Left colon (tissue), 2 donors: ENCODE measurements at regions of chr12 and their contacts with region 1.

Region 1: DNA sequence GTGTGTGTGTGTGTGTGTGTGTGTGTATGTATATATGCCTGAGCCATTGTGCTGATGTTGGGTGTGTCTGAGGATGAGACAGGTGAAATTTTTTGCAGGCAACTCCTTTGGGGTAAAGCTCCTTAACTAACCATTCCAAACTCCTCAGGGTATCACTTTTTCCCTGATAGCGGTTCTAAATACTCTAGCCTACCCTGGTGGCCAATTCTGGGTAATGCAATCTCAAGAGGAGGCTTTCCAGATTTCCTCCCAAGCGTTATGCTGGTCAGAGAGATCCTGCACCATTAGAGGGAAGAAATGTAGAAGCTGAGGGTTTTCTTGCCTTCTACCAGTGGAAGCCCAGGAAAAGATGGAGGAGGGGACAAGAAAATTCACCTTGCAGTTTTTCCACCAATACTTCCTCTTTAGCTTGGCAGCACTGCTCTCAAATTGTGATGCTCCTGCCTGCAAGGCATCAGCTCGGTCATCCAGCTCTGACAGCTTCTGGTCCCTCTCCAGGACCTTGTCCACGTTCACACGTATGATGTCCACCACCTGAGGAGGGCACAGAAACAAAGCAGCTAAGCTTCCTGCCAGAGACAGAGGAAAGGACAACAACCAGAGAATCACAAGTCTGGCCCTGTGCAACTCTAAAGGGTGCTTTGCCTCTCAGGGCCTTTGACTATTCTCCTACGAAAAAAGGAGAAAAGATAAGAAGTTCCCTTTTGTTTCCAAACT is 4.9 kb downstream of the VAMP1 start:
- DNase-seq: no peak
- ATAC-seq: peak; percentile 48

Region 2: GRCh38 chr12:6323340-6323994 is 142.2 kb before region 1 on chr12:
- intact Hi-C with region 1: loop called in 1 of 2 experiments (anchors 10 kb)
- DNase-seq: no peak
- ATAC-seq: peak; percentile 40

Region 3: GRCh38 chr12:6367065-6367968 is 98.3 kb before region 1 on chr12:
- intact Hi-C with region 1: no loop called
- DNase-seq: no peak
- ATAC-seq: no peak

Region 4: DNA sequence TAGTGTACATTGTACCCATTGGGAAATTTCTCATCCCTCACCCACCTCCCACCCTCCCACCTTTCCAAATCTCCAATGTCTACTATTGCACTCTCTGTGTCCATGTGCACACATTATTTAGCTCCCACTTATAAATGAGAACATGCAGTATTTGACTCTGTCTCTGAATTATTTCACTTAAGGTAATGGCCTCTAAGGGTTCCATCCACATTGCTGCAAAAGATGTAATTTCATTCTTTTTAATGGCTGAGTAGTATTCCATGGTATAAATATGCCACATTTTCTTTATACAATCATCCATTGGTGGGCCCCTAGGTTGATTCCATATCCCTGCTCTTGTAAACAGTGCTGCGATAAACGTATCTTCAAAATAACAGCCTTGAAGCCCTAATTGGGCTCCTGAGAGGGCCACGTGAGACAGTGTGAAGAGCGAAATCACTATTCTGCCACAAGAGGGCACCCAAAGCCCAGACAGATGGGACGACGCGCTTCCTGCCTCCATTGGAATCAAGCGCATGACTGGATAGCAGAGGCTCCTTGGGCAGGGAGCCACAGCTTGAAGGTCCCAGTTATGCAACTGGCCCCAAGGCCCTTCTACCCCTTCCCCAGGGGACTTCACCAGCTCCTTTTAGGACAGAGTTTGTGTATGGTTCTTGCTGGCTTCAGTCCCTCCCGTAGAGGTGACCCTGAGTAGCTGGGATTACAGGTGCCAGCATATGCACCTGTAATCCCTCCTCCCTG is 42.2 kb before region 1 on chr12:
- intact Hi-C with region 1: loop called in 1 of 2 experiments (anchors 2 kb)
- DNase-seq: peak; percentile 80 to 85
- ATAC-seq: peak; percentile 98

Region 5: DNA sequence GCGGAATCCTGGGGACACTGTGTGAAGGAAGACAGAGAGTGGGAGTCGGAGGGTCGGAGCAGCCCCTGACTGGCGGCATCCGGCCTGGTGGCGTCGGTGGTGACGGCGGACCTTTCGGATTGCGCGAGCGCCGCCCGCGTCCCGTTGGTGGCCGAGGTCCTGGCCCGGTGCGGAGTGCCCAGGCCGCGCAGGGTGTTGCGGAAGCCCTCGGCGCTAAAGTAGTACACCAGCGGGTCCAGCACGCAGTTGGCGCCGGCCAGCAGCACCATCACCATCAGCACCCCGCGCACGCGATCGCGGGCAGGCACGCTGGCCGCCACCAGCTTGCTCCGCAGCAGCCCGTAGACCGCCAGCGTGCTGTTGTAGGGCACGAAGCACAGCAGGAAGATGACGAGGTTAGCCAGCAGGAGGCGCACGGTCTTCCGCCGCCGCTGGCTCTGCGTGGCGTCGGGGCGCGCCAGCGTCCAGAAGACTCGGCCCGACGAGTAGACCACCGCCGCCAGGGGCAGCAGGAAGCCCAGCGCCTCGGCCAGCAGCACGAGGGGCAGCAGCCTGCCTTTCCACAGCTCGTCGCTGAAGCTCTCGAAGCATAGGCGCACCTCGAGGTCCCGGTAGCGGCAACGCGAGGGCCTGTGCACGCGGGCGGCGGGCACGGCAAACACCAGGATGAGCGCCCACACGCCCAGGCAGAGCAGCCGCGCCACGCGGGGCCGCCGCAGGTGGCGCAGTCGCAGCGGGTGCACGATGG is 154.7 kb after region 1 on chr12:
- intact Hi-C with region 1: no loop called
- DNase-seq: no peak
- ATAC-seq: no peak

Region 6: DNA sequence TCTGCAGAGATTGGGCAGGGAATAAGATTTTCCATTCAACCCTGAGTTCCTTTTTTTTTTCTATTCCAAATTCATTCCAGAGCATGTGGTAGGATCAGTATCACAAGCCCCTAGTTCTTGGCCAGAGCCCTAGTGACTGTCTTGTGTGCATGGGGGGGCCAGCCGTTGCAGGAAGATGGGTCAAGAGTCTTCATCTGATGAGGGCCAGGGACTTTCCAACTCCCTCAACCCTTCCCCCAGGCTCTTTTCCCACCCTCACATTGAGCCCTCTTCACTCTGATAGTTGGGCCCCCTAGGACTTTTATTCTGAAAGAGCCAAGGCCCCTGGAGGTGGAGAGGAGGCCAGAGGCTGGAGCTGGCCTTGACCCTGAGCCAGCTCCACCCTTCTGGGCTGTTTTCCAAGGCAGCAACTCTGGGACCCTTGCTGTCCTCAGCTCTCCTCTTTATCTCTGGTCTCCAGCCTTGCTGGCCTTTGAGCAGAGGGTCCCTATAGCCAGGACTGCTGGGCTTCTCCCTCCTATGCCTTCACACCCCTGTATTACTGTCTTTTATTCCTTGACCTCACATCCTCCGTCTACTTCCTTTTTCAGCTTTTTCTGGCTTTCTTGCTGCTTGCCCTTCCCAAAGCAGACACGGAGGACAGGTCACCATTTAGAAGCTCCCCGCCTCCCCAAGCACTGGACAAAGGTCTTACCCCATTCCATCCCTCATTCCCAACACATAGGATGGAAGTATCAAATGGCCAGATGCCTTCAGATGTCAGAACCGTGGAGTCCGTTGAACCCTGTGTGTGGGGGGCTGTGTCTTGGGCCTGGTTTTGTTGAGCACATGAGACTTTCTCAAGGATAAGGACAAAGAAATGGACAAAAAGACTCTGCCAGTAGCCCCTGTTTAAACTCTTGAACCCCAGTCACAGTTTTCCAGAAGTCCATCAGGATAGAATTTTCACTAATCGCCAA is 657.5 kb after region 1 on chr12:
- intact Hi-C with region 1: no loop called
- DNase-seq: no peak
- ATAC-seq: no peak